ENCODE measurements at regions of chr22 and their contacts with region 1.

Region 1: DNA sequence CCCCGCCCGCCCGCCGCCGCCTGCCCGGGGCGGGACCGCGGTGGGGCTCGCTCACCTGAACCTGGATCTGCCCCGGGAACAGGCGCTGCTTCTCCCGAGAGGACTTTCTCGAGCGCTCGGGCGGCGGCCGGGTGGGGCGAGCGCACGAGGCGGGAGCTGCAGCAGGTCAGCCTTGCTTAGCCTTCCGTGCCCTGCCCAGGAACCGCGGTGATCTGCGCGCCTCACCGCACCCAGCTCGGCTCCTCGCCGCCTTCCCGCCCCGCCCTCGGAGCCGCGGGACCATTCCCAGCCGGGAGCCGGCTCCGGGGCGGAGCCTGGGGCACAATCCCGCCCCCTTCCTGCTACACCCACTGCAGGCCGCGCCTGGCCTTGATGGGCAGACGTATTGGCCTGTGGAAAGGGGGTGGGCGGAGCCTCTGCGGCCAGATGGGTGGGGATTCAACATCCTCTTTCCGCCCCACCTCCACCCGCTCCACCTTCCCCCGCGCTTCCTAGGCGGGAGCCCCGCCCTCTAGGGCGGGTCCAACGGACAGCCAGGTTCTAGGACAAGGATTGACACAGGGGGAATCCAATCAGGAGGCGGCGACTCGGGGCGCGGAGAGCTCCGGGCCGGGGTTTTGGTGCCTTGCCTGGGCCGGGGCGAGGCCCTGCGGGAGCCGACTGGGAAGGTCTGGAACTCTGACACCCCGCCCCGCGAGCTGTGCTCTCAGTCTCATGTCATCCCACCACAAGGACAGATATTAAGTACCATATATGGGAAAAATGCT is at the start of gene MYH9:
- DNase-seq: peak; percentile 100
- H3K4me3 ChIP-seq: peak within 1 kb of the TSS; percentile 92
- H3K27ac ChIP-seq: peak within 1 kb of the TSS; percentile 100
- H3K4me1 ChIP-seq: peaks cover 68% of the 10 kb centered on the region
- H3K27me3 ChIP-seq: no peaks in the 10 kb centered on the region
- CTCF ChIP-seq: no peak
- total RNA-seq, gene MYH9: 150 TPM

Region 2: DNA sequence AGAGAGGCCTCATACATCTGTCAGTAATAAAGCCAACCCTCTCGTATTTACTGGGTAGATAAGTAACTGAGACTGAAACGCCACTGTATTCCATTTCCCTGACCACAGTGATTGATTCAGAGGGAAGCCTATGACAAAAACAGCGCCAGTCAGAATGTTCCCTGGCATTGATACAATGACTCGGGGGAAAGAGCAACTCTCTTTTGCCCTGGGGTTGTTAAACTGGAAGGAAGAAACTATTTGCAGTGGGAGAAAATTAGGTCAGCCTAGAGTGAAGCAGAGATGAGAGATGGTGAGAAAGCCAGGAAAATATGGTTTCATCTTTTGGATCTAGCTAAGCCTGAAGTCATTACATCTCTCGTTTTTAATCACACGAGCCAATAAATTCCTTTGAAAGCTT is 310.7 kb before region 1 on chr22:
- intact Hi-C with region 1: no loop called
- DNase-seq: no peak
- H3K4me3 ChIP-seq: no peak overlapping the region
- H3K27ac ChIP-seq: peak overlapping the region; percentile 33
- H3K4me1 ChIP-seq: no peaks in the 10 kb centered on the region
- H3K27me3 ChIP-seq: no peaks in the 10 kb centered on the region
- CTCF ChIP-seq: no peak

Region 3: GRCh38 chr22:36331306-36331911 is 56.5 kb before region 1 on chr22:
- intact Hi-C with region 1: loop called (anchors 10 kb)
- DNase-seq: peak; percentile 80
- H3K4me3 ChIP-seq: peak overlapping the region; percentile 36
- H3K27ac ChIP-seq: peak overlapping the region; percentile 100
- H3K4me1 ChIP-seq: peaks cover 100% of the 10 kb centered on the region
- H3K27me3 ChIP-seq: no peaks in the 10 kb centered on the region
- CTCF ChIP-seq: no peak